Common myeloid progenitor, CD34-positive (primary cell): ENCODE measurements at regions of chr10 and their contacts with region 1.

Region 1: DNA sequence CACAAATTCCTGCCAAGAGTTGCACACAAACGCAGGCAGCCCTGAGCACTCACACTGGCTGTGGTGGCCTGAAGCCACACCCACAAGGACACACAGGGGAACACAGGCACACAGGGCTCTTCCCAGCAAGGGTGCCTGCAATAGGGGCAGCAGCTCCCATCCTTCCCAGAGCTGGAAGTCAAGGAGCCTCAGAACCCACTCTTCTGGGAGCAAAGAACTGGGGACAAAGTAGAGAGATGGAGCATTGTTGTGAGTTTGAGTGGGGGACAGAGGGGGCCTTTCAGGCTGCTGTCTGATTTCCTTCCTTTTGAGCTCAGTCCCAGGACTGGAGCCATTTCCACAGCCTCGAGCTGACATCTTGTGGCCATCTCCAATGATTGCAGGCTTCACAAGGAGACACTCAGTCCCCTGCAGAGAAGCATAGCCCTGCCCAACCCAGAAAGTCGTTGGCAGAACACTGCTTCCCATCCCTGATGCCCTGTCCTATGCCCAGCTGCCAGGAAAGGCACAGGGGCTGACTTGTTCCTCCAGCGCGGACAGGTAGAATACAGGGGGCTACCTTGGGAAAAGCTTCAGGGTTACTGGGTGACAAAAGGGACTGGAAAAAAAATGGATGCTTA is 34.4 kb upstream of the SLF2 start:
- DNase-seq: peak; percentile 68 to 87 (median 79)
- H3K4me3 ChIP-seq: no peak overlapping the region
- H3K27ac ChIP-seq: no peak overlapping the region
- H3K4me1 ChIP-seq: peaks cover 0 to 3% (median 0%) of the 10 kb centered on the region in 4 experiments
- H3K27me3 ChIP-seq: peaks cover 0 to 18% (median 9%) of the 10 kb centered on the region in 5 experiments

Region 2: DNA sequence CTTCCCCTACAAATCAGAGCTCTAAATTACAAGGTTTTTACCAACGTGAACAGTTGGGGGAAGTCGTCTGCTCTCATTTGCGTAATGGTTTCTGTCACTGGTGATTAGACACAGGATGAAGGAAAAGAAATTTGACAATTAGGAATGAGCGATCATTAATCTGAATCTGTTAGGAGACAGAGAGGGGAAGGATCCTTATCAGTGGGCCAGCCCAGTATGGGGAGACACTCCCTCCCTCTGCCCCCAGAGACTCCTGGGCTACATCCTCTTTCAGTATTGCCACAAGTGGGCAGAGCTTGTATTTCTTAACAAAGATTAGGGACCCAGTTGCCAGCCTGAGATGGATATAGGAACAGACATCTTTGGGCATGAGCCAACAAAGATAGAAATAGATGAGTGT is 327.2 kb before region 1 on chr10:
- CTCF ChIA-PET with region 1: interaction called, 13 read pairs
- POLR2A ChIA-PET with region 1: no interaction called
- DNase-seq: no peak
- H3K4me3 ChIP-seq: no peak overlapping the region
- H3K27ac ChIP-seq: no peak overlapping the region
- H3K4me1 ChIP-seq: no peaks in the 10 kb centered on the region
- H3K27me3 ChIP-seq: no peaks in the 10 kb centered on the region

Region 3: DNA sequence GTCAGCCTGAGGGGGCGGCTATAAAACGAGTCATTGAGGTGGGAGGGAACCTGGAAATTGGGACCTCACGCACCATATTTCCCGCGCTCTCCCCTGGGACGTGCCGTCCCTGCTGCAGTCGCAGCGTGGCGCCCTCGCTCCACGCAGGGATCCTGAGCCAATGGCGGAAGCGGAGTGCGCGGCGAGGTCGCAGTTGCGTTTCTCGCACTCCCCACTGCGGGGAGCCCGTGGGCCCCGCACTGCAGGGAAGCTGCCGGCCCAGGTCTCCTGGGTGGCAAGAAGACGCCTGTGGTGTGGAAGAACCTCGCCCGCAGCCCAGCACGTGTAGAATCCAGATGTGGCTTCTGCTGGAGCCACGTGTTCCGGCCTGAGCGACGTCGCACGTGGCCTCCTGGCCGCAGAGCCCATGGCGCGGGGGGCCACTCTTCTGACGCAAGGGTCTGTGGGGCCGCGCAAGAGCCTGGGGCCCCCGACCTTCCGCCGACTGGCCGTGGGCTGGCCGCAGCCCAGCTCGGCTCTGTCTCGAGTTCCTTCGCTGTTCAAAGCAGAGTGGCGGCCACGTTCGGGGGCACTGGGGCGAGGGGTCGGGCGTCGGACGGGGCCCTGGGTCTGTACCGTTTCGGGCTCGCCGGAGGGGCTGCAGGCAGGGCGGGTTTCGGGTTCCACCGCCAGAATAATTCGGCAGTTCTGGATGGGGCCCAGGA is 316.2 kb before region 1 on chr10:
- CTCF ChIA-PET with region 1: interaction called, 68 read pairs
- POLR2A ChIA-PET with region 1: no interaction called
- DNase-seq: peak; percentile 87 to 93 (median 91)
- H3K4me3 ChIP-seq: peak overlapping the region in 3 of 7 experiments; percentile 8 to 50 (median 23)
- H3K27ac ChIP-seq: no peak overlapping the region
- H3K4me1 ChIP-seq: peaks cover 0 to 15% (median 14%) of the 10 kb centered on the region in 4 experiments
- H3K27me3 ChIP-seq: peaks cover 0 to 61% (median 32%) of the 10 kb centered on the region in 5 experiments

Region 4: GRCh38 chr10:100743626-100744135 is 134.7 kb before region 1 on chr10:
- CTCF ChIA-PET with region 1: interaction called, 11 read pairs
- POLR2A ChIA-PET with region 1: no interaction called
- DNase-seq: peak; percentile 84 to 88 (median 86)
- H3K4me3 ChIP-seq: no peak overlapping the region
- H3K27ac ChIP-seq: no peak overlapping the region
- H3K4me1 ChIP-seq: peaks cover 0 to 40% (median 17%) of the 10 kb centered on the region in 4 experiments
- H3K27me3 ChIP-seq: peaks cover under 1 to 100% (median 64%) of the 10 kb centered on the region in 5 experiments

Region 5: DNA sequence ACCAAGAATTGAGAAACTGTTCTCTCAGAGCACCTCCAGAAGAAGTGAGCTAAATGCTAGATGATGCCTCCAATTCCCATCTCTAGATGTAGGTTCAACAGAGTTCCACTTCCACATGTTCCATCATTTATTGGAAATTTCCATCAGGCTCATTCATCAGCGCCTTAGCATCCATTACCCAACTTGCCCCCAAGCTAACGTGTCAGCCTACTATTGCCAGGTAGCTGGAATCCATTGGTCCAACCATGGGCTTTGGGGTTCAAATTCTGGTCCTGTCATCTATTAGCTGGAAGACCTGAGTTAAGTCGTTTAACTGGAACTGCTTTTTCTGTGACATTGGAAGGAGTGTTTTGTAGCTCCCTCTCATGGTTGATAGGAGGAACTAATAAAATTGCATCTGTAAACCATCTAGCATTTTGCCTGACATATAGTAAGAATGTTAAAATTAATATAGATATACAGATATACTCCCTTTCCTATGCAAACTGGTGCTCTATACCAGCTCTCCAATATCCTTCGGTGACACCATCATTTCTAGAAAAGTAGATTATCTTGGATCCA is 10.5 kb after region 1 on chr10:
- CTCF ChIA-PET with region 1: interaction called, 12 read pairs
- POLR2A ChIA-PET with region 1: no interaction called
- DNase-seq: peak in 2 of 3 donors; percentile 34 to 42
- H3K4me3 ChIP-seq: no peak overlapping the region
- H3K27ac ChIP-seq: no peak overlapping the region
- H3K4me1 ChIP-seq: no peaks in the 10 kb centered on the region
- H3K27me3 ChIP-seq: peaks cover 5 to 42% (median 11%) of the 10 kb centered on the region in 5 experiments

Region 6: GRCh38 chr10:100894589-100895294 is 16.3 kb after region 1 on chr10:
- CTCF ChIA-PET with region 1: interaction called, 12 read pairs
- POLR2A ChIA-PET with region 1: no interaction called
- DNase-seq: peak in 2 of 3 donors; percentile 48 to 61
- H3K4me3 ChIP-seq: no peak overlapping the region
- H3K27ac ChIP-seq: no peak overlapping the region
- H3K4me1 ChIP-seq: peaks cover 0 to 15% (median 12%) of the 10 kb centered on the region in 4 experiments
- H3K27me3 ChIP-seq: peaks cover 2 to 30% (median 9%) of the 10 kb centered on the region in 5 experiments